ENCODE measurements at regions of chr1 and their contacts with region 1.

Region 1: DNA sequence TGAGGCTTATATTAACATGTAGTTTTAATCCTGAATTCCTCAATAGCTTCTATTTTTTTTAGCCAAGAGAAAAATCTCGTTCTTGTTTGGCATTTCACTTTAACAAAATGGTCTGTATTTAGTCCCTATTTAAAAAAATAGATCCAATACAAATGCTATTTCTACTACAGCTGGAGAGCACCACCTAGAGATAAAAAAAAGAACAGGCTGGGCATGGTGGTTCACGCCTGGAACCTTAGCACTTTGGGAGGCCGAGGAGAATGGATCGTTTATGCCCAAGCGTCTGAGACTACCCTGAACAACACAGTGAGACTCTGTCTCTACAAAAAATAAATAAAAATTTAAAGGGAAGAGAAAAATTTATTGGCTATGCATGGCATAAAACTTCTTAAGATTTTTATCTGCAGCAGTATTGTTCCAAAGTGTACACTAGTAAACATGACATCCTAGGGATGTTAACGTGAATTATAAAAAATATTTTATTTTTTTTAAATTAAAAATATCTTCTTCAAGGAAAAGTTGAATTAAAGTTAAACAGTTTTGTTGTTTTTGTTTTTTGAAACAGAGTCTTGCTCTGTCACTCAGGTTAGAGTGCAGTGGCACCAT is 4.4 kb downstream of the ST7L start:
- DNase-seq: no peak
- ATAC-seq: no peak
- H3K4me3 ChIP-seq: no peak overlapping the region
- H3K27ac ChIP-seq: no peak overlapping the region
- H3K4me1 ChIP-seq: no peaks in the 10 kb centered on the region
- H3K27me3 ChIP-seq: no peaks in the 10 kb centered on the region

Region 2: GRCh38 chr1:112083487-112083886 is 531.1 kb before region 1 on chr1:
- intact Hi-C with region 1: no loop called
- DNase-seq: no peak
- ATAC-seq: no peak
- H3K4me3 ChIP-seq: no peak overlapping the region
- H3K27ac ChIP-seq: no peak overlapping the region
- H3K4me1 ChIP-seq: no peaks in the 10 kb centered on the region
- H3K27me3 ChIP-seq: no peaks in the 10 kb centered on the region

Region 3: GRCh38 chr1:112544011-112544688 is 70.4 kb before region 1 on chr1:
- intact Hi-C with region 1: no loop called
- DNase-seq: no peak
- ATAC-seq: peak; percentile 76
- H3K4me3 ChIP-seq: no peak overlapping the region
- H3K27ac ChIP-seq: peak overlapping the region; percentile 85 to 90
- H3K4me1 ChIP-seq: peaks cover 0 to 4% of the 10 kb centered on the region in 2 donors
- H3K27me3 ChIP-seq: no peaks in the 10 kb centered on the region

Region 4: GRCh38 chr1:112651205-112651604 is 36.6 kb after region 1 on chr1:
- intact Hi-C with region 1: loop called in 1 of 2 experiments (anchors 2 kb)
- DNase-seq: no peak
- ATAC-seq: no peak
- H3K4me3 ChIP-seq: no peak overlapping the region
- H3K27ac ChIP-seq: no peak overlapping the region
- H3K4me1 ChIP-seq: no peaks in the 10 kb centered on the region
- H3K27me3 ChIP-seq: no peaks in the 10 kb centered on the region